ENCODE measurements at regions of chr15 and their contacts with region 1.

Region 1: GRCh38 chr15:84716036-84716799 is at the start of gene SEC11A:
- DNase-seq: peak; percentile 94
- H3K4me3 Mint-ChIP-seq: peak within 1 kb of the TSS; percentile 94
- H3K27ac Mint-ChIP-seq: peak within 1 kb of the TSS; percentile 96
- H3K4me1 Mint-ChIP-seq: peaks cover 51% of the 10 kb centered on the region
- H3K27me3 Mint-ChIP-seq: no peaks in the 10 kb centered on the region
- total RNA-seq, gene SEC11A: 132 to 139 TPM

Region 2: DNA sequence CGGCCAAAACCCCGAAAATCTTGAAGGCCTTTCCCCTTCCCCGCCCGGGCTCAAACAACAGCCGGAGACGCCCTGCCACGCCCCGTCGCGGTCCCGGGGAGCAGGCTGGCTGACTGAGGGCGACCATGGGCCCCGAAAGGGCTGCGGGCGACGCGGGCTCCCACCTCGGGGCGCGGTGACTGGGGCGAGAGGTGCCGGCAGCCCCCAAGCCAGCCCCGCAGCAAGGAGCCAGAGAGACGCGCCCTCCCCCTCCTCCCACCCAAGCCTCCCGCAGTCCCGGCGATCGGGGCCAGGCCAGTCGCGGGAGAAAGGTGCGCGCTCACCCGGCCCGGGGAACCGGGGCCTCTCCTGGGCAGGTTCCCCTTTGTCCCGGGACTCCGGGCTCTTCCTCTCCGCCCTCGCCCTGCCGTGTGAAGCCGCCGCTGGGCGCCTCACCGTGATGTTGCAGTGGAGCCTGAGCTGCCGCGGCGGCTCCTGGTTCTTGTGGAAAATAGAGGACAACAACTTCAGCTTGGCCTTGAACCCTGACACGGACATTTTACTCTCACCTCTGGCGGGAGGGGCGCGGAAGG is 146.0 kb before region 1 on chr15:
- CTCF ChIA-PET with region 1: interaction called, 12 read pairs
- POLR2A ChIA-PET with region 1: interaction called, 4 read pairs
- DNase-seq: peak; percentile 70
- H3K4me3 Mint-ChIP-seq: peak overlapping the region; percentile 88
- H3K27ac Mint-ChIP-seq: peak overlapping the region; percentile 79
- H3K4me1 Mint-ChIP-seq: peaks cover 20% of the 10 kb centered on the region
- H3K27me3 Mint-ChIP-seq: peaks cover 2% of the 10 kb centered on the region

Region 3: GRCh38 chr15:84658080-84658787 is 58.0 kb before region 1 on chr15 and contains the start of gene NMB:
- CTCF ChIA-PET with region 1: interaction called, 36 read pairs
- POLR2A ChIA-PET with region 1: interaction called, 42 read pairs
- DNase-seq: peak; percentile 83
- H3K4me3 Mint-ChIP-seq: peak within 1 kb of the TSS; percentile 73
- H3K27ac Mint-ChIP-seq: peak within 1 kb of the TSS; percentile 76
- H3K4me1 Mint-ChIP-seq: peaks cover 35% of the 10 kb centered on the region
- H3K27me3 Mint-ChIP-seq: no peaks in the 10 kb centered on the region
- total RNA-seq, gene NMB: 4.0 to 4.1 TPM

Region 4: DNA sequence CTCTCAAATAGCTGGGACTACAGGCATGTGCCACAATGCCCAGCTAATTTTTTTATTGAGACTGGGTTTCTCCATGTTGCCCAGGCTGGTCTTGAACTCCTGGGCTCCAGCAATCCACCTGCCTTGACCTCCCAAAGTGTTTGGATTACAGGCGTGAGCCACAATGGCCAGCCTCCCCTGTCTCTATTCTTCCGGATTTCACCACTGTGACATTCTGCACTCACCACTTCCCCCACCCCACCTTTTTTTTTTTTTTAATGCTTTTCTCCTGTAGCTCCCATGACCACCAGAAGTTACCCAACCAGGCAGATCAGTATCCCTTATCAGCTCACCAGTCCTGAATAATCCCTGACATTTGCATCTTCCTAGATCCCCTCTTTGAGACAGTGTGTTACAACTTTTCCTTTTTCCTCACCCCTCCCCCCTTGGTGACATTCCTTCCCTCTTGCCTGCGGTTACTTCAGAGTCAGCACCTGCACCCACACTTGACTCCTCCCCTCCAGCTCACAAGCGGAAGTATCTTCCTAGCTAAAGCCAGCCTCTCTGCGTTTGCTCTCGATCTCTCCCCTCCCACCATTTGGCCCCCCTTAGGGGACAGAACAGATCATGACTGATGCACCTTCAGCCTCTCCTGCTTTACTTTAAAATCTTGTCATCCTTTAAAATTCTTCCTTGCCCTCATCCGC is 18.7 kb after region 1 on chr15:
- CTCF ChIA-PET with region 1: interaction called, 68 read pairs
- POLR2A ChIA-PET with region 1: interaction called, 233 read pairs
- DNase-seq: peak; percentile 79
- H3K4me3 Mint-ChIP-seq: peak overlapping the region; percentile 58
- H3K27ac Mint-ChIP-seq: peak overlapping the region; percentile 98
- H3K4me1 Mint-ChIP-seq: peaks cover 57% of the 10 kb centered on the region
- H3K27me3 Mint-ChIP-seq: no peaks in the 10 kb centered on the region

Region 5: GRCh38 chr15:84748274-84749110 is 32.3 kb after region 1 on chr15 and contains the start of gene ZNF592:
- CTCF ChIA-PET with region 1: interaction called, 24 read pairs
- POLR2A ChIA-PET with region 1: interaction called, 93 read pairs
- DNase-seq: peak; percentile 83
- H3K4me3 Mint-ChIP-seq: peak within 1 kb of the TSS; percentile 99
- H3K27ac Mint-ChIP-seq: peak within 1 kb of the TSS; percentile 99
- H3K4me1 Mint-ChIP-seq: peaks cover 63% of the 10 kb centered on the region
- H3K27me3 Mint-ChIP-seq: no peaks in the 10 kb centered on the region
- total RNA-seq, gene ZNF592: 36.6 to 38.0 TPM

Region 6: DNA sequence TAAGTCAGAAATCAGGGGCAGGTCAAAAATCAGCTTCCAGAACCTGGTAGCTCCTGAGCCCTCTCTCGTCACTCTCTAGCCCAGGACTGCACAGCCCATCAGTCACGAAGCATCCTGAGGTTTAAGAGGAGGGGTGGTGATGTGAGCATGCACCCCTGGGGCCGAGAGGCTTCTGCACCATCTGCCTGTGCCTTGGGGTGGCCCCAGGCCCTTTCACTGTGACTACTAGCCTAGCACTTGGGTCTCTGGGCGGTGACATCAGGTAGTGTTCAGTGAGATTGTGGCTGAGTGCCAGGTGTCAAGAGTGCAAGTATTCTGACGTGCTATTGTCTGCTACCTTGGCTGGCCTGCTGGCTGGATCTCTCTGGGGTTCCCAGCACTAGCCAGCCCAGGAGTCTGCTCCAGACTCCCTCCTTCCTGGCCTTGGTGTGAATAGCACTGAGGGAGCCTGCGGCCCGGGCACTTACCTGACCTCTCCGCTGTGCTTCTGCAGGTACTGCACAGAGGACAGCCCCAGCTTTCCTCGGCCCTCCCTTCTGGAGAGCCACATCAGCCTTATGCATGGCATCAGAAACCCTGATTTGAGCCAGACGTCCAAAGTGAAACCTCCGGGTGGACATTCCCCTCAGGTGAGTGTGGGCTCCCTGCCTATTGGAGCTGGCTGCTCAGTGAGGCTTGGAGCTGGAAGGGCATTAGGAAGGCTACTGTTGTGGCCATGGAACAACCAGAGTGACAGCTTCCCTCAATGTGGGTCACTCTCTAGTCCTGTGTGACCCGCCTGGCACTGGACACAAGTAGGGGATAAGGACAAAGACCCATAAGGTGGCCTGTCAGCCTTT is 83.3 kb after region 1 on chr15:
- CTCF ChIA-PET with region 1: no interaction called
- POLR2A ChIA-PET with region 1: no interaction called
- DNase-seq: no peak
- H3K4me3 Mint-ChIP-seq: no peak overlapping the region
- H3K27ac Mint-ChIP-seq: no peak overlapping the region
- H3K4me1 Mint-ChIP-seq: no peaks in the 10 kb centered on the region
- H3K27me3 Mint-ChIP-seq: no peaks in the 10 kb centered on the region